ENCODE measurements at regions of chr13 and their contacts with region 1.

Region 1: DNA sequence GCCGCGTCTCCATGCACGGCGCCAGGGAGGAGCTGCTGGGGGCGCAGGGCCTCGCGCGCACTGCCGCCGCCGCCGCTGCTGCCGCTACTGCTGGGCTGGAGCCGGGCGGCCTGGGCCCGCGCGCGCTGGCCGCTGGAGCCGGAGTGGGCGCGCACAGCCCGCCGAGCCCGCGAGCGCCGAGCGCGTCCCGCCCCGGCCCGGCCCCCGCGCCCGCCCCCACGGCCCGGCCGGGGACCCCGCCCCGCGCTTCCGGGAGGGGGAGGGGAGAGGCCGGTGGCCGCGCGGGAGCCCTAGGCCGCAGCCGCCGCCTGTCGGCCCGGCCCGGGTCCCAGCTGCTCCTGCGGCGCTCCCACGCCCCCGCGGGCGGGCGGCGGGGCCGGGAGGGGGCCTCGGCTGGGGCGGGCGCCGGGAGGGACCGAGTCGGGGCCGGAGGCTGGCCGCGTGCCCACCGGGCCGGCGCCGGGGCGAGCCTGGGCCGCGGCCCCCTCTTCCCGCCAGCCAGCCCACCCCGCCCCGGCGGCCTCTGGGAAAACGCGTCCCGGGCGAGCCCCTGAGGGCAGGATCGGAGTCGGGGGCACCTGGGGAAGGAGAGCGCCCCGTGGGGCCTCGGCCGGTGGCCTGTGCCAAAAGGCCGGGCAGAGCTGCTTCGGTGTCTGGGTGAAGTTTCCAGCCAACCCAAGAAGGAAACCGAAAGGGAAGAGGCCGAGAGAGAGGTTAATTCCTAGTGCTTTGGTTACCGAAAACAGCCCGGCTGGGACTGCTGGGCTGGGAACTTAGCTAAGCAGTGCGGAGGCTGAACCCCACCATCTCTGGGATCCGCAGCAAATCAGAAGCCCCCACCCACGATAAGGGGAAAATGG is at the start of gene STK24:
- DNase-seq: peak in 8 of 10 donors; percentile 28 to 93 (median 40)

Region 2: GRCh38 chr13:97975848-97976609 is 601.2 kb before region 1 on chr13:
- intact Hi-C with region 1: loop called (anchors 5 kb)
- DNase-seq: peak; percentile 75 to 99 (median 90)

Region 3: GRCh38 chr13:98445340-98446233 is 131.6 kb before region 1 on chr13:
- intact Hi-C with region 1: loop called (anchors 5 kb)
- DNase-seq: peak in 9 of 10 donors; percentile 61 to 95 (median 75)

Region 4: DNA sequence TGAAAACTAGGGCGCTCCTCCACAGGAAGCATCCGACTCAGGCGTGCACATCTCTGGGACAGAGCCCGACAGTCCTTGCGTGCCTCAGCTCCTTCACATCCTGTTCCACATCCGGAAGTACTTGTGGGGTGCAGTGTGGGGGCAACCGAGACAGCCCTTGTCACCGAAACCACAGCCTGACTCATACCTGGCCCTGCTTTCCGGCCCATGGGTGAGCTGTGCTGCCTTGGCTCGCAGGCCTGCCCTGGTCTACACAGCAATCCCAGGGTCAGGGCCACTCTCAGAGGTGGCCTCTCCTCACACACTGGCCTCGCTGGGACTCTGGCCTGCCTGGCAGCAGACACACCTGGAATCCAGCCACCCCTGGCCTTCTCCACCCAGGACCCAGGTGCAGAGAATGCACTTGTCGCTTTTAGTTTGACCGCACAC is 100.6 kb before region 1 on chr13:
- intact Hi-C with region 1: loop called (anchors 10 kb)
- DNase-seq: no peak

Region 5: DNA sequence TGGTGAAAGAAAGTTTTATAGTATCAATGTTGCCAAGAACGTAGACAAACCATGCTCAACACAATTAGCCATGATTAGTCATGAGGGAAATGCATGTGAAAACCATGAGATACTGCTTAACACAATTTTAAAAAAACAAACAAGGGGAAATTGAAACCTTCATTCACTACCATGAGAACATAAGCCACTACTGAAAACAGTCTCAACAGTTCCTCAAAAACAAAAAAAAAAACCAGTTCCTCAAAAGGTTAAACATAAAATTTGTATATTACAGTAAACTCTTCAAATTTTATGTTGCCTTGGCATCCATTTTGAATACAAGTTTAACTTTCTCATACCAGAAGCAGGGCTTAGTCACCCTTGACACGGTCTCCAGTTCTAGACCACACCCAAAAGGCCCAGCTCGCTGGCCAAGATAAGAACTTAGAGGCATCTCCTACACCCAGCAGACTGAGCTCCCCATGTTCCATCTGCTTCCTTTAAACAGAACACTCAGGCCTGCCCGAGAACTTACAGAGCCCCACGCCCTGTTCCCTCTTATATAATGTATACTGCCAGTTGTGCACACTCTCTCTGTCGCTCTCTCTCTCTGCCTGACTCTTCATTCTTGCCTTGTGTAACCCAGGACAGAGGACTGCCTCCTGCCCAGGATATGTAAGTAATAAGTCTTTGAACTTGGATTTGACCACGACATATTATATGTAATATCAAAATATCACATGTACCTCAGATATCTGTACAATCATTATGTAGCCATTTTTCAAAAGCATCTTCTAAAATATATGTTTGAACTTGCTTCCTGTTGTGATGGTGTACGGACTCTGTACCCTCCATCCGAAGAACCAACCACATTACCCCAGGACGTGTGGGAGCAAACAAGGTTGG is 67.7 kb before region 1 on chr13:
- intact Hi-C with region 1: loop called (anchors 10 kb)
- DNase-seq: peak in 1 of 10 donors; percentile 84

Measured in posterior cingulate gyrus (tissue), 11 donors.